ENCODE measurements at regions of chr5 and their contacts with region 1.

Region 1: GRCh38 chr5:111537141-111538024 is 25.0 kb upstream of the STARD4 start:
- DNase-seq: no peak
- ATAC-seq: no peak
- H3K4me3 ChIP-seq: no peak overlapping the region
- H3K4me3 Mint-ChIP-seq: no peak overlapping the region
- H3K27ac ChIP-seq: no peak overlapping the region
- H3K27ac Mint-ChIP-seq: no peak overlapping the region
- H3K4me1 ChIP-seq: no peaks in the 10 kb centered on the region
- H3K4me1 Mint-ChIP-seq: no peaks in the 10 kb centered on the region
- H3K27me3 ChIP-seq: no peaks in the 10 kb centered on the region
- H3K27me3 Mint-ChIP-seq: peaks cover 10% of the 10 kb centered on the region
- CTCF ChIP-seq: no peak

Region 2: GRCh38 chr5:111494364-111494999 is 42.9 kb before region 1 on chr5:
- CTCF ChIA-PET with region 1: no interaction called
- POLR2A ChIA-PET with region 1: no interaction called
- intact Hi-C with region 1: loop called in 1 of 2 experiments (anchors 1 kb)
- DNase-seq: no peak
- ATAC-seq: no peak
- H3K4me3 ChIP-seq: no peak overlapping the region
- H3K4me3 Mint-ChIP-seq: no peak overlapping the region
- H3K27ac ChIP-seq: no peak overlapping the region
- H3K27ac Mint-ChIP-seq: no peak overlapping the region
- H3K4me1 ChIP-seq: no peaks in the 10 kb centered on the region
- H3K4me1 Mint-ChIP-seq: peaks cover 17% of the 10 kb centered on the region
- H3K27me3 ChIP-seq: no peaks in the 10 kb centered on the region
- H3K27me3 Mint-ChIP-seq: no peaks in the 10 kb centered on the region
- CTCF ChIP-seq: no peak